ENCODE measurements at regions of chr14 and their contacts with region 1.

Region 1: DNA sequence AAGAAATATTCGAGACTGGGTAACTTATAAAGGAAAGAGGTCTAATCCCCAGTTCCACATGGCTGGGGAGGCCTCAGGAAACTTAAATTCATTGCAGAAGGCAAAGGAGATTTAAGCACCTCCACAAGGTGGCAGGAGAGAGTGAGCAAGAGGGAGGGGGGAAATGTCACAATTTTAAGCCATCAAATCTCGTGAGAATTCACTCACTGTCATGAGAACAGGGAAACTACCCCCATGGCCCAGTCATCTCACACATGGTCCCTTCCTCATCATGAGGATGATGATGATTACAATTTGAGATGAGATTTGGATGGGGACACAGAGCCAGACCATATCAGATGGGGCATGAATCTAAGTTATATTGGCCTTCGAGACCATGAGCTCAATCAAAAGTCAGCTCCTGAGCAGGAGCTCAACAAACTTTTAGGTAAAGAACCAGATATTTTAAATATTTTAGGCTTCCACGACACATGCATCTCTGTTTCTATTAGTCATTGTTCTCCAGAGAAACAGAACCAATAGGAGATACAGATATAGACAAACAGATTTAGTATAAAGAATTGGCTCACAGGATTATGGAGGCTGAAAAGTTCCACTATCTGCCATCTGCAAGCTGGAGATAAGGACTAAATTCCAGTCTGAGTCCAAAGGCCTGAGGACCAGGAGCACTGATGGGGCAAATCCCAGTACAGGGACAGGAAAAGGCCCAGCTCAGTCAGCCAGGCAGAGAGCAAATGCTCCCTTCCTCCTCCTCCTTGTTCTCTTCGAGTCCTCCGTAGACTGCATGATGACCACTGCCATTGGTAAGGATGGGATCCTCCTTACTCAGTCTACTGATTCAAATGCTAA is 24.9 kb downstream of the DGLUCY start:
- DNase-seq: peak in 10 of 14 experiments; percentile 19 to 77 (median 30)
- ATAC-seq: peak; percentile 74
- H3K4me3 ChIP-seq: no peak overlapping the region
- H3K4me3 Mint-ChIP-seq: no peak overlapping the region
- H3K27ac ChIP-seq: no peak overlapping the region
- H3K27ac Mint-ChIP-seq: no peak overlapping the region
- H3K4me1 ChIP-seq: peaks cover 23% of the 10 kb centered on the region
- H3K4me1 Mint-ChIP-seq: peaks cover 36% of the 10 kb centered on the region
- H3K27me3 ChIP-seq: no peaks in the 10 kb centered on the region
- H3K27me3 Mint-ChIP-seq: no peaks in the 10 kb centered on the region
- CTCF ChIP-seq: peak; percentile 61

Region 2: GRCh38 chr14:90903101-90903500 is 235.6 kb before region 1 on chr14:
- CTCF ChIA-PET with region 1: interaction called, 4 read pairs
- POLR2A ChIA-PET with region 1: no interaction called
- intact Hi-C with region 1: loop called in 1 of 2 experiments (anchors 1 kb)
- DNase-seq: peak; percentile 33 to 78 (median 47)
- ATAC-seq: peak; percentile 94
- H3K4me3 ChIP-seq: no peak overlapping the region
- H3K4me3 Mint-ChIP-seq: no peak overlapping the region
- H3K27ac ChIP-seq: no peak overlapping the region
- H3K27ac Mint-ChIP-seq: no peak overlapping the region
- H3K4me1 ChIP-seq: no peaks in the 10 kb centered on the region
- H3K4me1 Mint-ChIP-seq: no peaks in the 10 kb centered on the region
- H3K27me3 ChIP-seq: no peaks in the 10 kb centered on the region
- H3K27me3 Mint-ChIP-seq: no peaks in the 10 kb centered on the region
- CTCF ChIP-seq: peak; percentile 86

Region 3: GRCh38 chr14:91218014-91218413 is 79.3 kb after region 1 on chr14:
- CTCF ChIA-PET with region 1: no interaction called
- POLR2A ChIA-PET with region 1: no interaction called
- intact Hi-C with region 1: no loop called
- DNase-seq: no peak
- ATAC-seq: no peak
- H3K4me3 ChIP-seq: no peak overlapping the region
- H3K4me3 Mint-ChIP-seq: no peak overlapping the region
- H3K27ac ChIP-seq: no peak overlapping the region
- H3K27ac Mint-ChIP-seq: no peak overlapping the region
- H3K4me1 ChIP-seq: peaks cover 13% of the 10 kb centered on the region
- H3K4me1 Mint-ChIP-seq: peaks cover 25% of the 10 kb centered on the region
- H3K27me3 ChIP-seq: no peaks in the 10 kb centered on the region
- H3K27me3 Mint-ChIP-seq: no peaks in the 10 kb centered on the region
- CTCF ChIP-seq: no peak

Measured in CD4-positive, alpha-beta T cell (primary cell).